ENCODE measurements at regions of chr3 and their contacts with region 1.

Region 1: DNA sequence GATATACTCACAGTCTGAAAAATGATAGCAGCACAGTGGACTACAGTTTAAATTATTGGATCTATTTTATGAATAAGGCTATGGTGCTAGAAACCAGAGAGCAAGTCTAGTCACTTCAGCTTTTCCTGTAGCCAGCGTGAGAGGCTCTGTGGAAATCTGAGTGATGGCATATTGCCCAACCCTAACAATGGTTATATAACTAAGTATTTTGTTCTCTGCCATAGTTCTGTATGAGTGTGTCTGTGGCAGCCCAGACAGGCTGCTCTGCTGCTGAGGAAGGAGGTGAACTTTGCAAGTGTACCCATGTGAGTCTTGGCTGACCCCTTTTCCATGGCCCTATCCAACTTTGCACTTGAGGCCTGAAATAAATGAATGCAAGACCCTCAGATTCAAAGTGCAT is 105.7 kb downstream of the LRTM1 start:
- DNase-seq: no peak
- ATAC-seq: no peak
- H3K4me3 ChIP-seq: no peak overlapping the region
- H3K27ac ChIP-seq: no peak overlapping the region
- H3K4me1 ChIP-seq: no peaks in the 10 kb centered on the region
- H3K27me3 ChIP-seq: no peaks in the 10 kb centered on the region
- CTCF ChIP-seq: no peak

Region 2: GRCh38 chr3:54312156-54312899 is 509.9 kb before region 1 on chr3:
- CTCF ChIA-PET with region 1: no interaction called
- POLR2A ChIA-PET with region 1: no interaction called
- in situ Hi-C with region 1: no loop called
- intact Hi-C with region 1: loop called (anchors 5 kb)
- DNase-seq: no peak
- ATAC-seq: no peak
- H3K4me3 ChIP-seq: no peak overlapping the region
- H3K27ac ChIP-seq: no peak overlapping the region
- H3K4me1 ChIP-seq: no peaks in the 10 kb centered on the region
- H3K27me3 ChIP-seq: no peaks in the 10 kb centered on the region
- CTCF ChIP-seq: no peak

Region 3: GRCh38 chr3:55180936-55181535 is 358.8 kb after region 1 on chr3:
- CTCF ChIA-PET with region 1: no interaction called
- POLR2A ChIA-PET with region 1: no interaction called
- in situ Hi-C with region 1: no loop called
- intact Hi-C with region 1: no loop called
- DNase-seq: no peak
- ATAC-seq: no peak
- H3K4me3 ChIP-seq: no peak overlapping the region
- H3K27ac ChIP-seq: no peak overlapping the region
- H3K4me1 ChIP-seq: no peaks in the 10 kb centered on the region
- H3K27me3 ChIP-seq: no peaks in the 10 kb centered on the region
- CTCF ChIP-seq: peak; percentile 68; the same call in 1 of the 2 replicates

Measured in Panc1 (cell line).